Calu3 (cell line): ENCODE measurements at regions of chr2 and their contacts with region 1.

Region 1: GRCh38 chr2:198309673-198310280 is 505.4 kb downstream of the PLCL1 start:
- DNase-seq: peak; percentile 70
- H3K4me3 Mint-ChIP-seq: no peak overlapping the region
- H3K27ac Mint-ChIP-seq: no peak overlapping the region
- H3K4me1 Mint-ChIP-seq: peaks cover 13% of the 10 kb centered on the region
- H3K27me3 Mint-ChIP-seq: no peaks in the 10 kb centered on the region
- CTCF ChIP-seq: peak; percentile 77

Region 2: GRCh38 chr2:198322294-198322693 is 12.5 kb after region 1 on chr2:
- CTCF ChIA-PET with region 1: no interaction called
- intact Hi-C with region 1: no loop called
- DNase-seq: peak; percentile 25
- H3K4me3 Mint-ChIP-seq: no peak overlapping the region
- H3K27ac Mint-ChIP-seq: no peak overlapping the region
- H3K4me1 Mint-ChIP-seq: no peaks in the 10 kb centered on the region
- H3K27me3 Mint-ChIP-seq: no peaks in the 10 kb centered on the region
- CTCF ChIP-seq: peak; percentile 20

Region 3: DNA sequence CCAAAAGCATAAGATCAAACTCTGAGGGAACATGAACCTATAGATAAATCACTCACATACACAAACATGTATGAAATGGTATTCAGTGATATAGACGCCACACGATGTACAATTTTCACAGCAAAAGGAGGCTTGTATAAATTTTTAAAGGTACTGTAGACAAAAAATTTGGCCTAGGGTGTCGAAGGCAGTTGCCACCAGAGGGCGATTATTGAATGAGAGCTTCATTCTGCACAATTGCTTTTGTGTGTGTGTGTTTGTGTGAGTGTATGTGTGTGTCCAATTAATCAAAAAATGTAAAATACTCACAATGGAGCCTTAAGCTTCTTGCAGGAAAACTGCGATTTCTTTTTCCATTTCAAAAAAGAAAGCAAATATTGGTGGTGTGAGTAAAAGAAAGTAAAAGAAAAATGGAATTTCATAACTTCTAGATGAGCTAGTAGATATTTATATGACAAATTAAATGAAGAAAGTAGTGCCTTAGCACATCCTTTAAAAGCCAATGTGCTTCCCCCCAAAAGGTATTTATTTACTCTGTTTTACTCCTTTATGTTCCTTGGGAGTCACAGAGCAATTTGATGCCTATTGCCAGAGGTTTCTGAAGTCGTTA is 347.8 kb after region 1 on chr2:
- CTCF ChIA-PET with region 1: no interaction called
- intact Hi-C with region 1: loop called (anchors 5 kb)
- DNase-seq: peak; percentile 50
- H3K4me3 Mint-ChIP-seq: no peak overlapping the region
- H3K27ac Mint-ChIP-seq: no peak overlapping the region
- H3K4me1 Mint-ChIP-seq: no peaks in the 10 kb centered on the region
- H3K27me3 Mint-ChIP-seq: no peaks in the 10 kb centered on the region
- CTCF ChIP-seq: peak; percentile 60

Region 4: DNA sequence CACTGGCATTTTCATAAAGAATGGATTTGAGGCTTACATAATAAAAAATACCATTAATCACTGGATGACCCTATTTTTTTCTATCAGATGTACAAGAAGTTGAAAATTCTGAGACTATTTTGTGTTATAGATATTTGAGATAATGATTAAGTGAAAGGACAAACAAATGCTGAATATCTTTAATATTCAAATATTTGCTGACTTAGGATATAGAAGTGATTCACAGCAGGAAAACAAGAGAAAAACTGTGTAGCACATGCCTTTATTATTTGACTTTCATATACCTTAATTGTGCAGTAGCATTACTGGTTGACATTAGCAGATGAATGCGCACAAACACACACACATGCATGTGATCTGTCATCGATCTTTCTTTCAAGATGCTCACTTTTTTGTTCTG is 381.5 kb after region 1 on chr2:
- CTCF ChIA-PET with region 1: no interaction called
- intact Hi-C with region 1: no loop called
- DNase-seq: no peak
- H3K4me3 Mint-ChIP-seq: no peak overlapping the region
- H3K27ac Mint-ChIP-seq: no peak overlapping the region
- H3K4me1 Mint-ChIP-seq: no peaks in the 10 kb centered on the region
- H3K27me3 Mint-ChIP-seq: no peaks in the 10 kb centered on the region
- CTCF ChIP-seq: no peak

Region 5: GRCh38 chr2:199085261-199085660 is 775.5 kb after region 1 on chr2:
- CTCF ChIA-PET with region 1: no interaction called
- intact Hi-C with region 1: loop called (anchors 10 kb)
- DNase-seq: peak; percentile 36
- H3K4me3 Mint-ChIP-seq: peak overlapping the region; percentile 10
- H3K27ac Mint-ChIP-seq: peak overlapping the region; percentile 40
- H3K4me1 Mint-ChIP-seq: peaks cover 24% of the 10 kb centered on the region
- H3K27me3 Mint-ChIP-seq: no peaks in the 10 kb centered on the region
- CTCF ChIP-seq: no peak

Region 6: GRCh38 chr2:199596549-199596948 is 1286.8 kb after region 1 on chr2:
- CTCF ChIA-PET with region 1: interaction called, 5 read pairs
- intact Hi-C with region 1: loop called (anchors 5 kb)
- DNase-seq: peak; percentile 42
- H3K4me3 Mint-ChIP-seq: no peak overlapping the region
- H3K27ac Mint-ChIP-seq: no peak overlapping the region
- H3K4me1 Mint-ChIP-seq: no peaks in the 10 kb centered on the region
- H3K27me3 Mint-ChIP-seq: peaks cover 24% of the 10 kb centered on the region
- CTCF ChIP-seq: peak; percentile 54